IMR-90 (cell line): ENCODE measurements at regions of chr12 and their contacts with region 1.

Region 1: GRCh38 chr12:8609061-8609570 is 3.5 kb downstream of the AICDA start:
- DNase-seq: peak; percentile 47
- ATAC-seq: peak; percentile 82
- H3K4me3 ChIP-seq: no peak overlapping the region
- H3K27ac ChIP-seq: no peak overlapping the region
- H3K4me1 ChIP-seq: no peaks in the 10 kb centered on the region
- H3K27me3 ChIP-seq: no peaks in the 10 kb centered on the region
- CTCF ChIP-seq: peak; percentile 58
- POLR2A ChIP-seq: no peak
- RAD21 ChIP-seq: peak; percentile 35; the same call in 1 of the 2 replicates

Region 2: GRCh38 chr12:8544295-8544694 is 64.8 kb before region 1 on chr12:
- CTCF ChIA-PET with region 1: interaction called, 9 read pairs
- POLR2A ChIA-PET with region 1: no interaction called
- dilution Hi-C with region 1: no loop called
- in situ Hi-C with region 1: no loop called
- intact Hi-C with region 1: loop called (anchors 1 kb)
- DNase-seq: peak; percentile 59
- ATAC-seq: peak; percentile 86
- H3K4me3 ChIP-seq: no peak overlapping the region
- H3K27ac ChIP-seq: no peak overlapping the region
- H3K4me1 ChIP-seq: no peaks in the 10 kb centered on the region
- H3K27me3 ChIP-seq: no peaks in the 10 kb centered on the region
- CTCF ChIP-seq: peak; percentile 81
- POLR2A ChIP-seq: no peak
- RAD21 ChIP-seq: peak; percentile 54